Kidney (tissue), 22 donors: ENCODE measurements at regions of chr4 and their contacts with region 1.

Region 1: GRCh38 chr4:173257732-173258717 is 76.1 kb downstream of the HMGB2 start:
- DNase-seq: peak in 4 of 5 donors; percentile 44 to 83 (median 68)
- H3K4me3 ChIP-seq: no peak overlapping the region
- H3K27ac ChIP-seq: no peak overlapping the region
- H3K4me1 ChIP-seq: no peaks in the 10 kb centered on the region
- H3K27me3 ChIP-seq: no peaks in the 10 kb centered on the region
- CTCF ChIP-seq: peak; percentile 69

Region 2: GRCh38 chr4:173025131-173025530 is 232.9 kb before region 1 on chr4:
- intact Hi-C with region 1: loop called (anchors 10 kb)
- DNase-seq: peak in 3 of 5 donors; percentile 53 to 85 (median 69)
- H3K4me3 ChIP-seq: no peak overlapping the region
- H3K27ac ChIP-seq: no peak overlapping the region
- H3K4me1 ChIP-seq: no peaks in the 10 kb centered on the region
- H3K27me3 ChIP-seq: no peaks in the 10 kb centered on the region
- CTCF ChIP-seq: peak; percentile 65